ENCODE measurements at regions of chr18 and their contacts with region 1.

Region 1: GRCh38 chr18:62030091-62030985 is 137.5 kb upstream of the RNF152 start:
- DNase-seq: no peak
- ATAC-seq: no peak
- H3K4me3 ChIP-seq: no peak overlapping the region
- H3K4me3 Mint-ChIP-seq: no peak overlapping the region
- H3K27ac ChIP-seq: no peak overlapping the region
- H3K27ac Mint-ChIP-seq: no peak overlapping the region
- H3K4me1 ChIP-seq: peaks cover 0 to 18% of the 10 kb centered on the region in 2 donors
- H3K4me1 Mint-ChIP-seq: peaks cover 7 to 38% (median 23%) of the 10 kb centered on the region in 7 donors
- H3K27me3 ChIP-seq: no peaks in the 10 kb centered on the region
- H3K27me3 Mint-ChIP-seq: peaks cover 0 to 13% (median 6%) of the 10 kb centered on the region in 5 donors

Region 2: DNA sequence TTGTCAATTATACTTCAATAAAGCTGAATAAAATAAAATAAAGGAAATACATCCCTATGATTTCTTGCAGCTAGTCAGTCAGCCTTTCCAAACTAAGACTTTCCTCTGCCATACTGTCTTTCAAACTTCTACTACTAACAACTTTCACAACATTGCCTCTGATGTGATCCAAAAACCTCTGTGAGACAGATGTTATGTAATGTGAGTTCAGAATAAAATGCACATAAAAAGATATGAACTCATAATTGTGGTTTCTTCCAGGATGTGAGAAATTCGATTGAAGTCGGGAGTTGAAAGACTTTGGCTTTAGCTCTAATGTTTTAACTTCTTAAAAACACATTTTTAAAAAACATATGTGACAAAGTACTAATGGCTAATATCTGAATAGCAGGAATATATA is 57.8 kb after region 1 on chr18:
- CTCF ChIA-PET with region 1: no interaction called
- POLR2A ChIA-PET with region 1: interaction called, 3 read pairs
- intact Hi-C with region 1: loop called in 1 of 2 experiments (anchors 10 kb)
- DNase-seq: peak in 7 of 9 donors; percentile 33 to 74 (median 61)
- ATAC-seq: peak; percentile 80
- H3K4me3 ChIP-seq: no peak overlapping the region
- H3K4me3 Mint-ChIP-seq: peak overlapping the region in 7 of 10 donors; percentile 25 to 67 (median 51)
- H3K27ac ChIP-seq: no peak overlapping the region
- H3K27ac Mint-ChIP-seq: peak overlapping the region in 4 of 9 donors; percentile 5 to 30 (median 20)
- H3K4me1 ChIP-seq: peaks cover 0 to 18% of the 10 kb centered on the region in 2 donors
- H3K4me1 Mint-ChIP-seq: peaks cover 7 to 48% (median 36%) of the 10 kb centered on the region in 7 donors
- H3K27me3 ChIP-seq: no peaks in the 10 kb centered on the region
- H3K27me3 Mint-ChIP-seq: no peaks in the 10 kb centered on the region

Measured in naive thymus-derived CD4-positive, alpha-beta T cell (primary cell).